IMR-90 (cell line): ENCODE measurements at regions of chr9 and their contacts with region 1.

Region 1: GRCh38 chr9:6006968-6007769 is 8.3 kb downstream of the RANBP6 start:
- DNase-seq: peak; percentile 71
- ATAC-seq: peak; percentile 77
- H3K4me3 ChIP-seq: peak overlapping the region; percentile 90
- H3K27ac ChIP-seq: peak overlapping the region; percentile 71
- H3K4me1 ChIP-seq: no peaks in the 10 kb centered on the region; the same call in 1 of the 2 replicates
- H3K27me3 ChIP-seq: no peaks in the 10 kb centered on the region
- CTCF ChIP-seq: no peak
- POLR2A ChIP-seq: no peak
- RAD21 ChIP-seq: no peak

Region 2: GRCh38 chr9:5263351-5264218 is 743.6 kb before region 1 on chr9:
- CTCF ChIA-PET with region 1: no interaction called
- POLR2A ChIA-PET with region 1: no interaction called
- dilution Hi-C with region 1: no loop called
- in situ Hi-C with region 1: no loop called
- intact Hi-C with region 1: no loop called
- DNase-seq: no peak
- ATAC-seq: no peak
- H3K4me3 ChIP-seq: no peak overlapping the region
- H3K27ac ChIP-seq: no peak overlapping the region
- H3K4me1 ChIP-seq: no peaks in the 10 kb centered on the region
- H3K27me3 ChIP-seq: no peaks in the 10 kb centered on the region
- CTCF ChIP-seq: 0 out of 2 replicates have a peak, but pooled peaks have one; percentile 5
- POLR2A ChIP-seq: no peak
- RAD21 ChIP-seq: no peak

Region 3: DNA sequence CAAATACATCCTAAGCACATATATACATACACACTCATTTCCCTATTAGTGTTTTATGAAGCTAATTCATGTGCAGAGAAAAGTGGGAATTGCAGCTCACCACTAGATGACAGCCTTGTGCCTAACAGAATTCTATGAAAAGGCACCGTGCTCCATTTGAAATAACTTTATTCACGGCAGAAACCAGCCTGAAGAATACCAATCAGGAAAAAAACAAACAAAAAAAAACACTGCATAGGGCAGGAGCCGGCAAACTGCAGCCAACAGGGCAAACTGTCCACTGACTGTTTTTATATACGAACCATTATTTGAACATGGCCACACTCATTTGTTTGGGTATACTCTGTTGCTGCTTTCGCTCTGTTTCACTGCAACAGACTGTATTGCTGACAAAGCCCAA is 207.9 kb before region 1 on chr9:
- CTCF ChIA-PET with region 1: no interaction called
- POLR2A ChIA-PET with region 1: no interaction called
- dilution Hi-C with region 1: no loop called
- in situ Hi-C with region 1: no loop called
- intact Hi-C with region 1: loop called (anchors 2 kb)
- DNase-seq: peak; percentile 59
- ATAC-seq: peak; percentile 75
- H3K4me3 ChIP-seq: 0 out of 2 replicates have a peak overlapping the region, but pooled peaks have one; percentile 19
- H3K27ac ChIP-seq: no peak overlapping the region
- H3K4me1 ChIP-seq: no peaks in the 10 kb centered on the region
- H3K27me3 ChIP-seq: no peaks in the 10 kb centered on the region
- CTCF ChIP-seq: peak; percentile 78
- POLR2A ChIP-seq: no peak
- RAD21 ChIP-seq: peak; percentile 72

Region 4: GRCh38 chr9:6068983-6069382 is 61.8 kb after region 1 on chr9:
- CTCF ChIA-PET with region 1: no interaction called
- POLR2A ChIA-PET with region 1: no interaction called
- dilution Hi-C with region 1: no loop called
- in situ Hi-C with region 1: no loop called
- intact Hi-C with region 1: no loop called
- DNase-seq: no peak
- ATAC-seq: no peak
- H3K4me3 ChIP-seq: no peak overlapping the region
- H3K27ac ChIP-seq: no peak overlapping the region
- H3K4me1 ChIP-seq: no peaks in the 10 kb centered on the region
- H3K27me3 ChIP-seq: peaks cover 2% of the 10 kb centered on the region
- CTCF ChIP-seq: no peak
- POLR2A ChIP-seq: no peak
- RAD21 ChIP-seq: no peak